ENCODE measurements at regions of chr15 and their contacts with region 1.

Region 1: DNA sequence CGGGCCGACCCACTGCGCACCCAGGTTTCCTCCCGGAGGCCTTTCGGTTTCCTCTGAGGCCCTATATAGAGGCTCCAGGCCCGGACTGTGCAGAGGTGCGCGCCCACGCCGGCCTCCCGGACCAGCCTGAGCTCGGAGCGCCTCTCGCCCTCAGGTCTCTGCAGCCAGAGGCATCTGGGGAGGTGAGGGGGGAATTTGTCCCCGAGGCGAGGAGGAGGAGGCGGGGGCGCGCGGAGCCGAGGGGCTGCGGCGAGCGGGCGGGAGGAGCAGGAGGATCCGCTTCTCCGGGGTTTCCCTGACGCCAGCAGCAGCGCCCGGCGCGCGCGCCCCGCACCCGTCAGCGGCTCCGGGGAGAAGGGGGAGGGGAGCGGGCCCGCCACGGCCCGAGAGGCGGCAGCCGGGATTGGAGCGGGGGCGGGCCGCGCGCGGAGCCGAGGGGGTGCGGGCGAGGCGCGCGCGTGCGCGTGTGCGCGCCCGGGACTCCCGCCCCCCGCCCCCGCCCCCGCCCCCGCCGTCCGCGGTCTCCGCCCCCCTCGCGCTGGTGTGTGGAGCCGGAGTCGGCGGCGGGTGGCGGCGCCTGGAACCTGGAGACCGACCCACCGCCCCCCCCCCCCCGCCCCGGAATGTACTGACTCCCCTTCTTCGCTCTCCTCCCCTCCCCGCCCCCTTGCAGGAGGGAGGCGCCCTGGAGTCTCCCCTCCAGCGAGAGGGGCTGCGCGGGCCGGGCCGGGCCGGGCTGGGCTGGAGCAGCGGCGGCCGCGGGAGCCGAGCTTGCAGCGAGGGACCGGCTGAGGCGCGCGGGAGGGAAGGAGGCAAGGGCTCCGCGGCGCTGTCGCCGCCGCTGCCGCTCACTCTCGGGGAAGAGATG is at the start of gene NEO1:
- DNase-seq: peak; percentile 94
- H3K4me3 ChIP-seq: peak within 1 kb of the TSS; percentile 85 to 93 (median 88)
- H3K27ac ChIP-seq: peak within 1 kb of the TSS; percentile 96 to 97 (median 96)
- H3K4me1 ChIP-seq: peaks cover 0 to 32% (median 15%) of the 10 kb centered on the region in 4 donors
- H3K27me3 ChIP-seq: no peaks in the 10 kb centered on the region
- CTCF ChIP-seq: no peak
- EP300 ChIP-seq: no peak
- POLR2A ChIP-seq: peak; percentile 26 to 48
- total RNA-seq, gene NEO1: 19.3 to 42.1 (median 26.8) TPM

Region 2: DNA sequence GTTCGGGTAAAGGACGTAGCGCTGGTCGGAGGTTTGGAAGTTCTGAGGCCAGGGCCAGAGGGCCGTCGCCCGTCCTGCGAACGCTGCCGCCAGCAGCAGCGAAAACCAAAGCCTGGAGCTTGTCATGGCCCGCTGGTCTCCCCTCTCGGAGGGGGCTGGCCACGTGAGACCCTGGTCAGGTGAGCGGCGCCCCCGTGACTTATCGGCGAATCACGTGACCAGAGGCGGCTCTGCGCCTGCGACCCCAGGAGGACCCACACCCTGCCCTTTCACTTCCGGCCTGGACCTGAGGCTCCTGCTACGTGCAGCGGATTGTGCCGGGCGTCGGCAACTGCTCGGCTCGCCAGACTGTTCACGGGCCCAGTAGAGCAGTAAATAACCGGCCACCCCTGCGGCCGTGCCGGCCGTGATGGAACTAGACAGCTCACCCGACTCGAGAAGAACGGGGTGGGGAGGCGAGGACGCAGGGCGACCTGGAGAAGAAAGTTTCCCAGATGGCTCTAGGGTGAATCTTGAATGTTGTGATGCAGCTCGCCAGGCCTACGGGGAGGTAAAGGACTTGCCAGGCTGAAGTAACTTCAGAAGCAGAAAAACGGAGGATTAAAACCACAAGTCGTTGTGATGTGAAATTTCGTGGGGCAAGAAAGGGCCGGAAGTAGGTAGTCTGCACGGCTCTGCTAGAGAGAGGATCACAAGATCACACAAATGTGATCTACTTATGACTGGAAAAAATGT is 676.0 kb before region 1 on chr15 and contains the start of gene HEXA:
- intact Hi-C with region 1: loop called (anchors 5 kb)
- DNase-seq: peak; percentile 99
- H3K4me3 ChIP-seq: peak within 1 kb of the TSS; percentile 70 to 85 (median 78)
- H3K27ac ChIP-seq: peak within 1 kb of the TSS; percentile 82 to 86 (median 84)
- H3K4me1 ChIP-seq: peaks cover 0 to 33% (median 24%) of the 10 kb centered on the region in 4 donors
- H3K27me3 ChIP-seq: no peaks in the 10 kb centered on the region
- CTCF ChIP-seq: no peak
- EP300 ChIP-seq: peak in 2 of 4 donors; percentile 52 to 79
- POLR2A ChIP-seq: peak; percentile 59 to 74
- total RNA-seq, gene HEXA: 56.0 to 80.0 (median 66.7) TPM

Region 3: DNA sequence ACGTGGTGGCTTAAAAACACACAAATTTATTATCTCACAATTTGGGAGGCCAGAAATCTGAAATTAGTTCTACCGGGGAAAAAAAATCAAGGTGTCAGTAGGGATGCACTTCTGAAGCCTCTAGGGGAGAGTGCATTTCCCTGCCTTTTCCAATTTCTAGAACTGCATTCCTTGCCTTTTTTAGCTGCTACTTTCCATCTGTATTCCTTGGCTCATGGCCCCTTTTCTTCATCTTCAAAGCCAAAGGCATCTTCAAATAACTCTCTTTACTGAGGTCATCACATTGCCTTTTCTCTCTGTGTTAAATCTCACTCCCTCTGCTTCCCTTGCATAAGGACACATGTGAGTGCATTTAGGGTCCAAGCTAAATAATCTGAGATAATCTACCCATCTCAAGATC is 69.3 kb before region 1 on chr15:
- intact Hi-C with region 1: no loop called
- DNase-seq: no peak
- H3K4me3 ChIP-seq: no peak overlapping the region
- H3K27ac ChIP-seq: peak overlapping the region; percentile 10 to 58 (median 38)
- H3K4me1 ChIP-seq: peaks cover 0 to 25% (median 14%) of the 10 kb centered on the region in 4 donors
- H3K27me3 ChIP-seq: no peaks in the 10 kb centered on the region
- CTCF ChIP-seq: no peak
- EP300 ChIP-seq: no peak
- POLR2A ChIP-seq: no peak

Region 4: GRCh38 chr15:73081321-73081958 is 29.4 kb after region 1 on chr15:
- intact Hi-C with region 1: loop called (anchors 2 kb)
- DNase-seq: no peak
- H3K4me3 ChIP-seq: no peak overlapping the region
- H3K27ac ChIP-seq: no peak overlapping the region
- H3K4me1 ChIP-seq: peaks cover 0 to 36% (median 22%) of the 10 kb centered on the region in 4 donors
- H3K27me3 ChIP-seq: no peaks in the 10 kb centered on the region
- CTCF ChIP-seq: peak; percentile 45 to 64 (median 54)
- EP300 ChIP-seq: no peak
- POLR2A ChIP-seq: no peak

Region 5: DNA sequence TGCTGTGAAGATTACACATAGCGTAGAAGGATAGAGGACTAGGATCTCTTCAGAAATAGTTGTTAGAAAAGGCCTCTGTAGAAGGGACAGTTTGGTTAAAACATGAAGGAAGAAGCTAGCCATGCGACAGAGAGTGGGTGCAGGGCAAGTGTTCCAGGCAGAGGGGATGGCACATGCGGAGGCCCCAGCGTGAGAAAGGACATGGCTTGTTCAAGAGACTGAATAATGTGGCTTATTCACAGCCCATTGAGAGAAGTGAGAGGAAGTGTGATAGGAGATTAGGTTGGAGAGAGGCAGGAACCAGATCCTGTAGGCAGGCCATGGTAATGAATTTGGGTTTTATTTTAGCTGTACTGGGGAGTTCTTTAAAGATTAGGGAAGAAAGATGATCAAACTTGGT is 56.6 kb after region 1 on chr15:
- intact Hi-C with region 1: no loop called
- DNase-seq: no peak
- H3K4me3 ChIP-seq: no peak overlapping the region
- H3K27ac ChIP-seq: no peak overlapping the region
- H3K4me1 ChIP-seq: no peaks in the 10 kb centered on the region
- H3K27me3 ChIP-seq: no peaks in the 10 kb centered on the region
- CTCF ChIP-seq: no peak
- EP300 ChIP-seq: no peak
- POLR2A ChIP-seq: no peak